Activated CD8-positive, alpha-beta T cell treated with anti-CD3 and anti-CD28 coated beads for 36 hours (primary cell): ENCODE measurements at regions of chr5 and their contacts with region 1.

Region 1: DNA sequence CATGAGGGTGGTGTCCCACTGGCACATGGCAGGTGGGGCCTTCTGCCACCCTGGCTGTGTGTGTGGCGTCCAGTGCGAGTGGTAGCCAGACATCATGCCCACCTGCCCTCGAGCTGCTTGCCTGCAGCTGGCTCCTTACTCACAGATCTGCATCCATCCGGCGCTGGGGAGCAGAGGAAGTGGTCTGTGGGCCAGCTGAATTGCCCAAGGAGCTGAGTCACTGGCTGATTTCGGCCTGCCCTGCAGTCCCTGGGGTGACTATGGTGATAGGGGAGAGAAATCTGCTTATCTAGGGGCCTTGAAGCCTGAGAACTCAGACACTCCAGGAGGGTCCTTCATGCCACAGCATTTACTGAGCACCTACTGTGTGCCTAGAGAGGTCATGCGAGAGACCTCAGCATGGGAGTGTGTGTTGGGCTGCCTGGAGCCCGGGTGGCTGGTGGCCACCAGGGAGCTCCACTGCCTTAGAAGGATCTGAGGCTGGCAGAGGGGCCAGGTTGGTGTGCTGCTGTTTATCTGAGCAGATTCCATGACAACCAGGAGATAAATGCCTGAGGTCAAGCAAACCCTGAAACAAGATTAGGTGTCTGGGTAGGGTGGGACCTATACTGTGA is 57.1 kb downstream of the SLC22A5 start:
- DNase-seq: peak; percentile 92
- ATAC-seq: peak; percentile 56
- H3K4me3 Mint-ChIP-seq: peak overlapping the region; percentile 70
- H3K27ac Mint-ChIP-seq: peak overlapping the region; percentile 93
- H3K4me1 Mint-ChIP-seq: peaks cover 96% of the 10 kb centered on the region
- H3K27me3 Mint-ChIP-seq: no peaks in the 10 kb centered on the region
- CTCF ChIP-seq: peak; percentile 42

Region 2: DNA sequence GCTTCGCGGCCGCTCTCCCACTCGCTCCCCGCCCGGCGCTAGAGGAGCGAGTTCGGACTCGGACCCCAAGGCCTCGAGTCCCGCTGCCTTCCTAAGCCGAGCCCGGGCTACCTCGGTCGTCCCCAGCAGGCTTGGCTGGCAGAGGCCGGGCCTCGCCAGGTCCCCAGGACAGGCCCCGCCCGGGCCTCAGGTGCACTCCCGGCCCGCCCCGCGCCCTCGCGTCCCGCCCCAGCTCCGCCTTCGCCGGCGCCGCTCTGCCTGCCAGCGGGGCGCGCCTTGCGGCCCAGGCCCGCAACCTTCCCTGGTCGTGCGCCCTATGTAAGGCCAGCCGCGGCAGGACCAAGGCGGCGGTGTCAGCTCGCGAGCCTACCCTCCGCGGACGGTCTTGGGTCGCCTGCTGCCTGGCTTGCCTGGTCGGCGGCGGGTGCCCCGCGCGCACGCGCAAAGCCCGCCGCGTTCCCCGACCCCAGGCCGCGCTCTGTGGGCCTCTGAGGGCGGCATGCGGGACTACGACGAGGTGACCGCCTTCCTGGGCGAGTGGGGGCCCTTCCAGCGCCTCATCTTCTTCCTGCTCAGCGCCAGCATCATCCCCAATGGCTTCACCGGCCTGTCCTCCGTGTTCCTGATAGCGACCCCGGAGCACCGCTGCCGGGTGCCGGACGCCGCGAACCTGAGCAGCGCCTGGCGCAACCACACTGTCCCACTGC is 57.0 kb before region 1 on chr5 and contains the start of gene SLC22A5:
- CTCF ChIA-PET with region 1: no interaction called
- POLR2A ChIA-PET with region 1: no interaction called
- intact Hi-C with region 1: no loop called
- DNase-seq: peak; percentile 73
- ATAC-seq: peak; percentile 96
- H3K4me3 Mint-ChIP-seq: peak within 1 kb of the TSS; percentile 82
- H3K27ac Mint-ChIP-seq: peak within 1 kb of the TSS; percentile 84
- H3K4me1 Mint-ChIP-seq: peaks cover 28% of the 10 kb centered on the region
- H3K27me3 Mint-ChIP-seq: no peaks in the 10 kb centered on the region
- CTCF ChIP-seq: no peak
- total RNA-seq, gene SLC22A5: 4.0 to 4.1 TPM

Region 3: GRCh38 chr5:132437604-132438266 is 11.1 kb after region 1 on chr5:
- CTCF ChIA-PET with region 1: interaction called, 46 read pairs
- POLR2A ChIA-PET with region 1: interaction called, 89 read pairs
- intact Hi-C with region 1: no loop called
- DNase-seq: peak; percentile 84
- ATAC-seq: peak; percentile 89
- H3K4me3 Mint-ChIP-seq: peak overlapping the region; percentile 53
- H3K27ac Mint-ChIP-seq: peak overlapping the region; percentile 88
- H3K4me1 Mint-ChIP-seq: peaks cover 84% of the 10 kb centered on the region
- H3K27me3 Mint-ChIP-seq: no peaks in the 10 kb centered on the region
- CTCF ChIP-seq: no peak

Region 4: GRCh38 chr5:132456296-132457001 is 29.8 kb after region 1 on chr5:
- CTCF ChIA-PET with region 1: interaction called, 17 read pairs
- POLR2A ChIA-PET with region 1: interaction called, 129 read pairs
- intact Hi-C with region 1: no loop called
- DNase-seq: peak; percentile 79
- ATAC-seq: peak; percentile 59
- H3K4me3 Mint-ChIP-seq: peak overlapping the region; percentile 38
- H3K27ac Mint-ChIP-seq: peak overlapping the region; percentile 94
- H3K4me1 Mint-ChIP-seq: peaks cover 85% of the 10 kb centered on the region
- H3K27me3 Mint-ChIP-seq: no peaks in the 10 kb centered on the region
- CTCF ChIP-seq: no peak

Region 5: GRCh38 chr5:132479111-132479951 is 52.7 kb after region 1 on chr5:
- CTCF ChIA-PET with region 1: interaction called, 48 read pairs
- POLR2A ChIA-PET with region 1: interaction called, 1,131 read pairs
- intact Hi-C with region 1: no loop called
- DNase-seq: peak; percentile 9
- ATAC-seq: peak; percentile 5
- H3K4me3 Mint-ChIP-seq: no peak overlapping the region
- H3K27ac Mint-ChIP-seq: peak overlapping the region; percentile 35
- H3K4me1 Mint-ChIP-seq: peaks cover 73% of the 10 kb centered on the region
- H3K27me3 Mint-ChIP-seq: no peaks in the 10 kb centered on the region
- CTCF ChIP-seq: no peak

Region 6: GRCh38 chr5:133336121-133336968 is 909.7 kb after region 1 on chr5:
- CTCF ChIA-PET with region 1: no interaction called
- POLR2A ChIA-PET with region 1: no interaction called
- intact Hi-C with region 1: no loop called
- DNase-seq: peak; percentile 62
- ATAC-seq: peak; percentile 62
- H3K4me3 Mint-ChIP-seq: no peak overlapping the region
- H3K27ac Mint-ChIP-seq: no peak overlapping the region
- H3K4me1 Mint-ChIP-seq: peaks cover 23% of the 10 kb centered on the region
- H3K27me3 Mint-ChIP-seq: no peaks in the 10 kb centered on the region
- CTCF ChIP-seq: no peak